Spleen (tissue), 13 donors: ENCODE measurements at regions of chr2 and their contacts with region 1.

Region 1: DNA sequence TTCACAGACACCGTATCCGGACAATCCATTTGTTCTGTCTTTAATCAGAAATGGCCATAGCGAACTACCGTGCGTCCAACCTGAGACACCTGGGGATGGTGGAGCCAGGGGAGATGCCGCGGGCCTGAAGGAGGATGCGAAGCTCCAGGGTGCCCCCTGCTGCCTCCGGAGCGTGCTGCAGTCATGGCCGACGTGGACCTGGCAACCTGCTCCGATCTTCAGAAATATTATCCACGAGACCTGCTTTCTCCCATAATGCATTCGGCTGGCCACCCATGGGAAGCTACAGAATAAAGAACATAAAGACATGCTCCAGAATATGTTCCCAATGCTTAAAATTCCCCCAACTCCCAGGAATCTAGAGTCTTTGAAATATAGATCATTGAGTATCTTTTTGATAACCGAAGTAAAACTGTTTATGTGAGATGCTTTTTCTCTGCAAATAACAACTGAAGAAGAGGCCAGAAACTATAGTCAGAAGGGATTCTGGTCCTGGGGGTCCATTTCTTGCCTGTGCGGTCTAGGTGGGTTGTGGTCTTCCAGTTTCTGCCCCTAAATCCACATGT is 30.7 kb upstream of the SLC66A3 start:
- DNase-seq: peak; percentile 86
- H3K4me3 ChIP-seq: no peak overlapping the region
- H3K27ac ChIP-seq: no peak overlapping the region
- H3K4me1 ChIP-seq: peaks cover 2 to 32% (median 16%) of the 10 kb centered on the region in 6 donors
- H3K27me3 ChIP-seq: peaks cover 0 to 11% (median 0%) of the 10 kb centered on the region in 7 donors
- CTCF ChIP-seq: peak; percentile 43 to 82 (median 72)
- POLR2A ChIP-seq: no peak

Region 2: DNA sequence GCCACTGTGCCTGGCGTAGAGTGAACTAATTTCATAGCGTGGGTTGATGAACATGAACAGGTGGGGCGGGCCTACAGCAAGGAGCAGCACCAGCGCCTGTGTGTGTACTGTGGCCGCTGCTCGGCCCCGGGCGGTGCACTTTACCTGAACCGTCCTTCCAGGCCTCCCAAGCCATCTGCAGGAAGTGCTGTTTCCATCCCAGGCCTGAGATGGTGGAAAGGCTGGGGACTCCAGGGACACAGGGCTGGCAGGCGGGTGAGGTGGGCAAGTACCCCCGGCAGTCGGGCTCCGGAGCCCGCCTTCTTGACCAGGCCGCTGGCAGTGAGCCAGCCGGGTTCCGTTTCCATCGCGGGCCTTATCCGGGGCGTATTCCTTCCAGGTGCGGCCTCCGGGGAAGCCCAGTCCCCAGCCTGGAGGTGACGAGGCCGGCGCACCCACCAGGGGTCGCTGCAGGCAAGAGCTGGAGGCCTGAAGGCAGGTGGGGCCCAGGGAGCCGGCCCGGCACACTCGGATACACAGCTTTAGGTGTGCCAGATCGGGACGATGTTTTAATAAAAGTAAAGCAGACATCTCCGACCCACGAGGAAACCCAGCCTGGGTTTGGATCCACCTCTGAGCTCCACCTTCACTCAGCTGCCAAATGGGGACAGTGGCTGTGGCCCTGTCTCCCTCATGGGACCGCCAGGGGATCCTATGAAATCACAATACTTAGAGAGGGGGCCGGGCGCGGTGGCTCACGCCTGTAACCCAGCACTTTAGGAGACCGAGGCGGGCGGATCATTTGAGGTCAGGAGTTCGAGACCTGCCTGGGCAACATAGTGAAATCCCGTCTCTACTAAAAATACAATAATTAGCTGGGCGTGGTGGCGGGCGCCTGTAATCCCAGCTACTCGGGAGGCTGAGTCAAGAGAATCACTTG is 289.3 kb before region 1 on chr2:
- intact Hi-C with region 1: loop called (anchors 2 kb)
- DNase-seq: peak; percentile 91
- H3K4me3 ChIP-seq: peak overlapping the region in 1 of 8 donors; percentile 13
- H3K27ac ChIP-seq: no peak overlapping the region
- H3K4me1 ChIP-seq: peaks cover 4 to 51% (median 28%) of the 10 kb centered on the region in 6 donors
- H3K27me3 ChIP-seq: peaks cover 0 to 59% (median 6%) of the 10 kb centered on the region in 7 donors
- CTCF ChIP-seq: peak; percentile 41 to 90 (median 74)
- POLR2A ChIP-seq: no peak